OCI-LY7 (cell line): ENCODE measurements at regions of chr4 and their contacts with region 1.

Region 1: GRCh38 chr4:102255454-102255853 is 89.8 kb downstream of the SLC39A8 start:
- DNase-seq: no peak
- H3K4me3 ChIP-seq: no peak overlapping the region
- H3K27ac ChIP-seq: no peak overlapping the region
- H3K4me1 ChIP-seq: no peaks in the 10 kb centered on the region
- CTCF ChIP-seq: no peak

Region 2: GRCh38 chr4:102299354-102300107 is 44.1 kb after region 1 on chr4:
- CTCF ChIA-PET with region 1: no interaction called
- POLR2A ChIA-PET with region 1: no interaction called
- intact Hi-C with region 1: loop called (anchors 1 kb)
- DNase-seq: peak; percentile 56
- H3K4me3 ChIP-seq: no peak overlapping the region
- H3K27ac ChIP-seq: no peak overlapping the region
- H3K4me1 ChIP-seq: peaks cover 10% of the 10 kb centered on the region
- CTCF ChIP-seq: peak; percentile 90

Region 3: GRCh38 chr4:102430461-102430910 is 175.0 kb after region 1 on chr4:
- CTCF ChIA-PET with region 1: no interaction called
- POLR2A ChIA-PET with region 1: no interaction called
- intact Hi-C with region 1: loop called (anchors 1 kb)
- DNase-seq: no peak
- H3K4me3 ChIP-seq: peak overlapping the region; percentile 69
- H3K27ac ChIP-seq: peak overlapping the region; percentile 48
- H3K4me1 ChIP-seq: peaks cover 6% of the 10 kb centered on the region
- CTCF ChIP-seq: no peak

Region 4: DNA sequence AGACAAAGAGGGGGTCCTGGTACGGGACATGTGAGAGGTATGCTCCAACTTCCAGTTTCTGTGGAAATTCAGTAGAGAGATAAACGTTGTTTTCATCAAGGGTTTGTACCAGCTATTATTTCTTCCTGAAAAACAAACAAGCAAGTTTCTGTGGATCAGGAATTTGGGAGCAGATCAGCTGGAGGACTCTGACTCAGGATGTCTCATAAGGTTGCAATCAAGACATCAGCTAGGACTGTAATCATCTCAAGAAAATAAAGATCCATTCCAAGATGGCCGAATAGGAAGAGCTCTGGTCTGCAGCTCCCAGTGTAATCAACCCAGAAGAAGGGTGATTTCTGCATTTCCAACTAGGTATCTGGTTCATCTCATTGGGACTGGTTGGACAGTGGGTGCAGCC is 222.2 kb after region 1 on chr4:
- CTCF ChIA-PET with region 1: no interaction called
- POLR2A ChIA-PET with region 1: no interaction called
- intact Hi-C with region 1: no loop called
- DNase-seq: no peak
- H3K4me3 ChIP-seq: no peak overlapping the region
- H3K27ac ChIP-seq: no peak overlapping the region
- H3K4me1 ChIP-seq: no peaks in the 10 kb centered on the region
- CTCF ChIP-seq: no peak